ENCODE measurements at regions of chrX and their contacts with region 1.

Region 1: DNA sequence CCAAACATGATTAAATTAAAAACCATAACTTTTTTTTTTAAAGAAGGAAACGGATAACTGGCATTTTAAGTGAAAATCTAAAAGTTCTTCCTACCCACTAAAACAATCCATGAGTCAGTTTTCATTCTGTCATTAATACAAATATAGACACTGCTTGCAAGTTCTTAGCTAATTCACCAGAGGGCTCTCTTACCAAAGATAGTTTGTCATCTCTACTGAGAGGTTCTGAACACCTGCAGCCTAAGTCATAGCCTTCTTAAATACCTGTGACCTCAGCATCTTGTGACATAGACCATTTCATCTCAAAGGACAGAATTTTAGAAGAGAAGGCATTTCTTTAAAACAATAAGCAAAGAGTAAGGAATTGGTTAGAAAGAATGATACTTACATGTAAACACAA is 65.3 kb upstream of the FAM120C start:
- DNase-seq: peak; percentile 44
- ATAC-seq: no peak
- H3K4me3 ChIP-seq: no peak overlapping the region
- H3K27ac ChIP-seq: no peak overlapping the region
- H3K4me1 ChIP-seq: no peaks in the 10 kb centered on the region
- H3K27me3 ChIP-seq: peaks cover 2% of the 10 kb centered on the region; the same call in 1 of the 2 replicates
- CTCF ChIP-seq: peak; percentile 36
- POLR2A ChIP-seq: no peak
- RAD21 ChIP-seq: peak; percentile 40

Region 2: GRCh38 chrX:54439967-54440871 is 191.9 kb after region 1 on chrX and contains the start of gene TSR2:
- CTCF ChIA-PET with region 1: no interaction called
- POLR2A ChIA-PET with region 1: no interaction called
- dilution Hi-C with region 1: no loop called
- in situ Hi-C with region 1: no loop called
- intact Hi-C with region 1: loop called (anchors 10 kb)
- DNase-seq: peak; percentile 87
- ATAC-seq: peak; percentile 97
- H3K4me3 ChIP-seq: peak within 1 kb of the TSS; percentile 84
- H3K27ac ChIP-seq: peak within 1 kb of the TSS; percentile 38
- H3K4me1 ChIP-seq: no peaks in the 10 kb centered on the region
- H3K27me3 ChIP-seq: peaks cover 4% of the 10 kb centered on the region; the same call in 1 of the 2 replicates
- CTCF ChIP-seq: peak; percentile 40
- POLR2A ChIP-seq: no peak
- RAD21 ChIP-seq: peak; percentile 45
- total RNA-seq, gene TSR2: 8.8 and 14.4 TPM in 2 replicates

Region 3: GRCh38 chrX:55057675-55058249 is 809.5 kb after region 1 on chrX:
- CTCF ChIA-PET with region 1: no interaction called
- POLR2A ChIA-PET with region 1: no interaction called
- dilution Hi-C with region 1: no loop called
- in situ Hi-C with region 1: no loop called
- intact Hi-C with region 1: loop called (anchors 10 kb)
- DNase-seq: peak; percentile 28
- ATAC-seq: peak; percentile 82
- H3K4me3 ChIP-seq: no peak overlapping the region
- H3K27ac ChIP-seq: no peak overlapping the region
- H3K4me1 ChIP-seq: no peaks in the 10 kb centered on the region
- H3K27me3 ChIP-seq: no peaks in the 10 kb centered on the region; the same call in 1 of the 2 replicates
- CTCF ChIP-seq: peak; percentile 74
- POLR2A ChIP-seq: no peak
- RAD21 ChIP-seq: peak; percentile 85